Natural killer cell (primary cell): ENCODE measurements at regions of chr20 and their contacts with region 1.

Region 1: DNA sequence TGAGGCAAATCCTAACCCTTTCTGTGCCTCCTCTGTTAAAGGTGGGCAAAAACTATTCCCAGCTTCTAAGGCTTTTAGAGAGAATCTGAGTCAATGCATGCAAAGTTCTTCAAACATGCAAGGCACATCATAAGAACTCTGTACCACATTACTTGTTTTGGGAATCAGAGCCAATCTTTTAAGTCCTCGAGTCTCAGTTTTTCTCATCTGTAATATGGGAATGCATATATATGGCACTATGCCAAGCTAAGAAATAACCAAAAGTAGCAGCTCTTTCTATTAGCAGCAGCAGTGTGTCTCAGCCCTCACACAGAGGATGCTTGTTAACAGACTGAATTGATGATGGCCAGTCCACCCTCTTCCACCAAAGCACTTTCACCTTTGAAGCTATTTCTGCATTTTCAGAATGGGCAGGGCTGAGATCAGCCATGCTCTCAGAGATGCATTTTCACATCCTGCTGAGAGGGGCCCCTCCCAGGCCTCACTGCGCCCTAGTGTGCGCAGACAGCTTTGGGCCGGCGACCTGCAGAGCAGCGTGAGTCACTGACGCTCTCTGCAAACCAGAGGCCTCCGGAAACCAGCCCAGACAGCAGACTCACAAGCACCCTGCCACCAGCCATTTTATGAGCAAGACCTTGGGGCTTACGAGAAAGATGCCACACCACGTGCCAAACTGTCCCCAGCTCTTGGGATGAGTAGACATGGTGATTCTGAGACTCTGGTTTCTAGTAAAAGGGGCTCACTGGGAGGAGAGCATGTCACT is 138.0 kb downstream of the NFATC2 start:
- DNase-seq: peak; percentile 79 to 94
- ATAC-seq: peak; percentile 73 to 91 (median 84)
- H3K4me3 ChIP-seq: no peak overlapping the region
- H3K4me3 Mint-ChIP-seq: peak overlapping the region; percentile 82
- H3K27ac ChIP-seq: peak overlapping the region; percentile 92
- H3K27ac Mint-ChIP-seq: peak overlapping the region; percentile 95 to 100
- H3K4me1 ChIP-seq: peaks cover 92% of the 10 kb centered on the region
- H3K4me1 Mint-ChIP-seq: peaks cover 74 to 86% of the 10 kb centered on the region in 2 donors
- H3K27me3 ChIP-seq: no peaks in the 10 kb centered on the region
- H3K27me3 Mint-ChIP-seq: no peaks in the 10 kb centered on the region
- CTCF ChIP-seq: no peak

Region 2: DNA sequence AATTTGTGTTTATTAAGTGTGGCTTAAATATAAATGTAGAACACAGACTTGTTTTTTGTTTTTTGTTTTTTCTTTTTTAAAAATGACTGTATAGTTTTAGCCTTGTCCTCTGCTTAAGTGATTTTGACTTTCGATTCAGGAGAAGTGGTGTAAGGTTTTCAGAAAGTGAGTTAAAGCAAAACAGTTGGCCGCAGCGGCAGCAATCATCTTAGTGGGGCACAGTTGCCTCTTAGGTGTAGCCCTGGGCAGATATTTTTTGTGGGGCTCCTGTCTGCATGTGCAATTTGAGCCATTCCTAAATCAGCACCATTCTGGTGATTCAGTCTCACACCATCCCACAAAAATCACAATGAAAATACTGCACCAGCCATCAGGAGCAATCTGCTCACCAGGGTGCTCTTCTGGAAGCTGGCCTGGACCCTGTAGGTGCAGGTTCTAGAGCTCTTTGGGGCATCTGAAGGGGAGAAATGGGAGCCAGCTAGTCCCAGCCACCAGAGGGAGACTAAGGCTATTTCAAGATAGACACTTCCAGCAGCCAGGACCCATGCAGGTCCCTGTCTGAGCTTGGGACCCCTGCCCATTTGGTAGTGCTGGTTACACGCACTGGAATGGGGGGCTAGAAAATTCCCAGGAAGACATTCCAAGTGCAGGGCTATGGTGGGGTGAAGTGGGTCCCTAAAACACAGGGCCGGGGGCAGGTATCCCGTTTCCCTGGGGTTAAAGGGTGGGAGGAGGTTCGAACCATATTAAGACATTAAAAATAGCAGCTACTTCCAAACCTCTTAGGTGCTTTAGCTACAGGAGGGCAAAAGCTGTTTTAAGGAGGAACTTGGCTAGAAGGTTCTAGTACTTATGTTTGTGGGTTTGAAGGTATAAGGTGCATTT is 18.6 kb before region 1 on chr20:
- intact Hi-C with region 1: loop called (anchors 2 kb)
- DNase-seq: peak in 1 of 2 donors; percentile 69
- ATAC-seq: peak in 2 of 3 donors; percentile 32 to 45
- H3K4me3 ChIP-seq: no peak overlapping the region
- H3K4me3 Mint-ChIP-seq: peak overlapping the region; percentile 25
- H3K27ac ChIP-seq: peak overlapping the region; percentile 26
- H3K27ac Mint-ChIP-seq: peak overlapping the region; percentile 80 to 86
- H3K4me1 ChIP-seq: peaks cover 48% of the 10 kb centered on the region
- H3K4me1 Mint-ChIP-seq: peaks cover 74 to 76% of the 10 kb centered on the region in 2 donors
- H3K27me3 ChIP-seq: no peaks in the 10 kb centered on the region
- H3K27me3 Mint-ChIP-seq: no peaks in the 10 kb centered on the region
- CTCF ChIP-seq: peak; percentile 53

Region 3: GRCh38 chr20:51494241-51495120 is 90.0 kb after region 1 on chr20:
- intact Hi-C with region 1: loop called (anchors 2 kb)
- DNase-seq: peak; percentile 51 to 77
- ATAC-seq: peak; percentile 46 to 57 (median 52)
- H3K4me3 ChIP-seq: no peak overlapping the region
- H3K4me3 Mint-ChIP-seq: peak overlapping the region; percentile 93
- H3K27ac ChIP-seq: peak overlapping the region; percentile 87
- H3K27ac Mint-ChIP-seq: peak overlapping the region; percentile 95 to 99
- H3K4me1 ChIP-seq: peaks cover 91% of the 10 kb centered on the region
- H3K4me1 Mint-ChIP-seq: peaks cover 100% of the 10 kb centered on the region in 2 donors
- H3K27me3 ChIP-seq: no peaks in the 10 kb centered on the region
- H3K27me3 Mint-ChIP-seq: no peaks in the 10 kb centered on the region
- CTCF ChIP-seq: no peak

Region 4: GRCh38 chr20:51531141-51531710 is 126.7 kb after region 1 on chr20:
- intact Hi-C with region 1: loop called (anchors 1 kb)
- DNase-seq: peak; percentile 68 to 85
- ATAC-seq: peak; percentile 64 to 69 (median 66)
- H3K4me3 ChIP-seq: no peak overlapping the region
- H3K4me3 Mint-ChIP-seq: peak overlapping the region; percentile 87
- H3K27ac ChIP-seq: peak overlapping the region; percentile 83
- H3K27ac Mint-ChIP-seq: peak overlapping the region; percentile 95 to 100
- H3K4me1 ChIP-seq: peaks cover 95% of the 10 kb centered on the region
- H3K4me1 Mint-ChIP-seq: peaks cover 94 to 100% of the 10 kb centered on the region in 2 donors
- H3K27me3 ChIP-seq: no peaks in the 10 kb centered on the region
- H3K27me3 Mint-ChIP-seq: no peaks in the 10 kb centered on the region
- CTCF ChIP-seq: no peak

Region 5: DNA sequence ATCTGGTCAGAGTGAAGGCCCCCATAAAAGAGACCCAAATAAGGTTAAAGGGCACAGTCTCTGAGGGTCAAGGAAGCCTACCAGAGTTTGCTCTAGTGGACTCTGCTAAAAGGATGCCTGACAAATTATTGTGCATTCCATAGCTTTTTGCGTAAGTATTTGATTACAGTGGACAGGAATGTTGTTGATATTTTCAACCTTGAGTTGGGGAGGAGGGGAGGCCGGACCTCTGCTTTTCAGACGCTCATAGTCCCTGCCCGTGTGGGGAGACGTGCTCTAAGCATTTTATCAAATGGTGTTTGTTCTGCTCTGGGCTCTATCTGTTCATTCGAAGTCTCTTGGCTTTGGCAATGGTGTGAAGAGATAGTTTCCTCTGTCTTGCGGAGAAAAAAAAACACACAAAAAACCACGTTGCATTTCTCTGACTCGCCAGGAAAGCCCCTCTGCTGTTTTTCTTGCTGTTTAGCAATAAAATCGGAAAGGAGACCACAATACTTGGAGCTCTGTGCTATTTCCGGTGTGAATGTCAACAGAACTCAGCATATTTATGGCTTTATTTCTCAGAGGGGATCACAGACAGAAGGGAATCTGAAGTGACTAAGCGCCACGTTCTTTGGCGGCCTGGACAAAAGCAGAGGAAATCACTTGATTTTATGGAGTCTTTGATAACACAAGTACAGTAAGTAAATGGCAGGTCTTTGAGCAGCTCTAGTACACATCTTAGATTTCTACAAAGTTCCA is 627.3 kb after region 1 on chr20:
- intact Hi-C with region 1: loop called (anchors 5 kb)
- DNase-seq: peak; percentile 33 to 71
- ATAC-seq: peak; percentile 83 to 90 (median 87)
- H3K4me3 ChIP-seq: no peak overlapping the region
- H3K4me3 Mint-ChIP-seq: peak overlapping the region; percentile 82
- H3K27ac ChIP-seq: peak overlapping the region; percentile 63
- H3K27ac Mint-ChIP-seq: peak overlapping the region; percentile 86 to 92
- H3K4me1 ChIP-seq: peaks cover 36% of the 10 kb centered on the region
- H3K4me1 Mint-ChIP-seq: peaks cover 28 to 37% of the 10 kb centered on the region in 2 donors
- H3K27me3 ChIP-seq: no peaks in the 10 kb centered on the region
- H3K27me3 Mint-ChIP-seq: no peaks in the 10 kb centered on the region
- CTCF ChIP-seq: no peak